ENCODE measurements at regions of chr14 and their contacts with region 1.

Region 1: GRCh38 chr14:81453166-81453766 is 53.1 kb upstream of the STON2 start:
- DNase-seq: peak in 7 of 9 donors; percentile 17 to 46 (median 34)
- ATAC-seq: peak; percentile 86
- H3K4me3 ChIP-seq: no peak overlapping the region
- H3K4me3 Mint-ChIP-seq: peak overlapping the region in 1 of 10 donors; percentile 19
- H3K27ac ChIP-seq: no peak overlapping the region
- H3K27ac Mint-ChIP-seq: no peak overlapping the region
- H3K4me1 ChIP-seq: no peaks in the 10 kb centered on the region
- H3K4me1 Mint-ChIP-seq: peaks cover 0 to 7% (median 0%) of the 10 kb centered on the region in 7 donors
- H3K27me3 ChIP-seq: no peaks in the 10 kb centered on the region
- H3K27me3 Mint-ChIP-seq: peaks cover 0 to 18% (median 5%) of the 10 kb centered on the region in 5 donors

Region 2: GRCh38 chr14:81269100-81269978 is 183.9 kb before region 1 on chr14:
- CTCF ChIA-PET with region 1: interaction called, 9 read pairs
- POLR2A ChIA-PET with region 1: no interaction called
- intact Hi-C with region 1: loop called (anchors 1 kb)
- DNase-seq: peak in 7 of 9 donors; percentile 14 to 45 (median 27)
- ATAC-seq: peak; percentile 82
- H3K4me3 ChIP-seq: no peak overlapping the region
- H3K4me3 Mint-ChIP-seq: no peak overlapping the region
- H3K27ac ChIP-seq: no peak overlapping the region
- H3K27ac Mint-ChIP-seq: no peak overlapping the region
- H3K4me1 ChIP-seq: no peaks in the 10 kb centered on the region
- H3K4me1 Mint-ChIP-seq: peaks cover 0 to 21% (median 6%) of the 10 kb centered on the region in 7 donors
- H3K27me3 ChIP-seq: no peaks in the 10 kb centered on the region
- H3K27me3 Mint-ChIP-seq: peaks cover 12 to 26% (median 17%) of the 10 kb centered on the region in 5 donors

Region 3: GRCh38 chr14:81311778-81312177 is 141.5 kb before region 1 on chr14:
- CTCF ChIA-PET with region 1: no interaction called
- POLR2A ChIA-PET with region 1: no interaction called
- intact Hi-C with region 1: no loop called
- DNase-seq: no peak
- ATAC-seq: peak; percentile 27
- H3K4me3 ChIP-seq: no peak overlapping the region
- H3K4me3 Mint-ChIP-seq: no peak overlapping the region
- H3K27ac ChIP-seq: no peak overlapping the region
- H3K27ac Mint-ChIP-seq: peak overlapping the region in 1 of 9 donors; percentile 38
- H3K4me1 ChIP-seq: no peaks in the 10 kb centered on the region
- H3K4me1 Mint-ChIP-seq: peaks cover 0 to 2% (median 0%) of the 10 kb centered on the region in 7 donors
- H3K27me3 ChIP-seq: no peaks in the 10 kb centered on the region
- H3K27me3 Mint-ChIP-seq: peaks cover 0 to 19% (median 9%) of the 10 kb centered on the region in 5 donors

Region 4: DNA sequence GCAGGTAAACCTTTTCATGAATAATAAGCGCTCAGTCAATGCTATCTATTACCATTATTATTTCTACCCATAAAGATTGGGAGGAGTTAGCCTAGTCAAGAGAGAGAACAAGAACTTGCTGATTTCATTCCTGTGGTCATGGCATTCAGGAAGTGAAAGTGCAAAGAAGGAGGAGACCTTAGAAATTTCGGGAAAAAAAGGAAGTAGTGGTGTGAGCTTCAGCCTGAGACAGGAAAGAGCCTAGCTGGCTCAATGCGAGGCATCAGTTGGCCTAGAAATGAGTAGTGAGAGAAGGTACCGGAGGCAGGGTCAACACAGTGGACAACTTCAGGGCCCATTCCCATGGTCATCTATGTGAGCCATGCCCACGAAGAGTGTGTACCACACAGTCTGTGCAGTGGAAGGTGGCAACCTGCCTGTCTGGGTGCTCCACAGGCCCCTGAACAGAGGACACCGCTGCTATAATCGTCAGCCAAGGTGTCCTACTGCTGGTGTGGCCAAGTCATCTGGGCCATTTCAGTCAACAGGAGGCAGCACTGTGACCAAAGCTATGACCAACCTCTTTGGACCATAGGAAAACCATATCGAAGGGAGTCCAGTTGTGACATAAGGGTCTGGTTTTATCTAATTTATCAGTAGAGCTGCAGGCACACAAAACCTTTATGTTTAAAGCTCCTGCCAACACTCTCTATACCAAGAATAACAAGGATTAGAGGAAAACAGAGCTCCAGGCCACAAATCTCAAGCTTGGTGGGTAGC is 36.9 kb before region 1 on chr14:
- CTCF ChIA-PET with region 1: no interaction called
- POLR2A ChIA-PET with region 1: no interaction called
- intact Hi-C with region 1: no loop called
- DNase-seq: no peak
- ATAC-seq: peak; percentile 82
- H3K4me3 ChIP-seq: no peak overlapping the region
- H3K4me3 Mint-ChIP-seq: no peak overlapping the region
- H3K27ac ChIP-seq: no peak overlapping the region
- H3K27ac Mint-ChIP-seq: no peak overlapping the region
- H3K4me1 ChIP-seq: no peaks in the 10 kb centered on the region
- H3K4me1 Mint-ChIP-seq: peaks cover 0 to 3% (median 0%) of the 10 kb centered on the region in 7 donors
- H3K27me3 ChIP-seq: no peaks in the 10 kb centered on the region
- H3K27me3 Mint-ChIP-seq: peaks cover 0 to 13% (median 2%) of the 10 kb centered on the region in 5 donors

Region 5: DNA sequence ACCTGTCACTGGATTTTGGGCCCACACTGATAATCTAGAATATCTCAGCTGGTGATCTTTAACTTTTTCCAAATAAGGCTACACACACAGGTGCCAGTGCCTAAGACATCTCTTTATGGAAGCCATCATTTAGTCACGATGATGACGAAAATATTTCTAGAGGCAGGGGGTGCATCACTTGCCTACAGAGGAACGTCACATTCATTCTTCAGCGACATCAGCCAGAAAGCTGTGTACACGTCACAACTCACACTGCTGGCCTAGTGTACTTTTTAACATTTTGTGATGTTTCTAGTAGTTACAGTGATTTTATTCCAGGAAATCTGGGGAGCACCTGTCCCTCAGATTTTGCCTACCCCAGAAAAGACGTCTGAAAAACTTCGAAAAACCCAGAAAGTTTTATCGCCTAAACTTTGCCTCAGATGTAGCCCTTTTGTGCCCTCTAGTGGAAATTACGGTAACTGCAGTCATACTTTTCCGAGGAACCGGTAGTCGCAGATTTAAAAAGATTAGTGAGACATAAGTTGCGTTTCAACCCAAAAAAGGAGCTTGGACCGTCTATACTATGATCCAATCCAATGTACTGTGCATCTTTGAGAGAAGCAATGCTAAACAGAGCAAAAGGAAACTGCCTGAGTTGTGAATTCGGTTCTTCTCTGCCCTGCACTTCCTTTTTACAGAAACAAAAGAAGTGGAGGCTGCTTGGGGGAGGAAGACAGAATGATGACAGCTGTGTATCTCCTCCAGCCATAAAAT is 11.2 kb after region 1 on chr14:
- CTCF ChIA-PET with region 1: no interaction called
- POLR2A ChIA-PET with region 1: no interaction called
- intact Hi-C with region 1: loop called in 1 of 2 experiments (anchors 1 kb)
- DNase-seq: peak; percentile 15 to 86 (median 75)
- ATAC-seq: peak; percentile 90
- H3K4me3 ChIP-seq: peak overlapping the region; percentile 85
- H3K4me3 Mint-ChIP-seq: peak overlapping the region; percentile 76 to 91 (median 88)
- H3K27ac ChIP-seq: peak overlapping the region; percentile 76
- H3K27ac Mint-ChIP-seq: peak overlapping the region; percentile 70 to 98 (median 91)
- H3K4me1 ChIP-seq: no peaks in the 10 kb centered on the region
- H3K4me1 Mint-ChIP-seq: peaks cover 0 to 14% (median 8%) of the 10 kb centered on the region in 7 donors
- H3K27me3 ChIP-seq: no peaks in the 10 kb centered on the region
- H3K27me3 Mint-ChIP-seq: no peaks in the 10 kb centered on the region

Region 6: DNA sequence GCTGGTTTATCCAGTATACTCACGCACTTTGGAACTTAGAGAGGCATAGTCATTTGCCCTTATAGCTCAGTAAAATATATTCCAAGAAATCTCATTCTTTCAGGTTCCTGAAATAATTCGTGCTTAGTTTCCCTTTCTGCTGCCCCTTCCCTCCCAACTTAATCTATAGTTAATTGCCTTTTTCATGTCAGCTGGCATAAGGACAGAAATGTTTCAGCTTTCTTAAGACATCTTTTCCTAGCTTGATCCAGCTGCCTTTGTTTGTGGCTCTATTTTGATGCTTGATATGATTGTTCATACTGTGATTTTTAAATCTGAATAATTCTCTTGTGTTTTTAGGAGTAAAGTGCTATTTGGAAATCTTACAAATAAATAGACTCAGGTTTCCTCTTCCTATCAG is 200.4 kb after region 1 on chr14:
- CTCF ChIA-PET with region 1: no interaction called
- POLR2A ChIA-PET with region 1: no interaction called
- intact Hi-C with region 1: no loop called
- DNase-seq: no peak
- ATAC-seq: no peak
- H3K4me3 ChIP-seq: no peak overlapping the region
- H3K4me3 Mint-ChIP-seq: no peak overlapping the region
- H3K27ac ChIP-seq: no peak overlapping the region
- H3K27ac Mint-ChIP-seq: no peak overlapping the region
- H3K4me1 ChIP-seq: no peaks in the 10 kb centered on the region
- H3K4me1 Mint-ChIP-seq: no peaks in the 10 kb centered on the region
- H3K27me3 ChIP-seq: no peaks in the 10 kb centered on the region
- H3K27me3 Mint-ChIP-seq: peaks cover 0 to 12% (median 7%) of the 10 kb centered on the region in 5 donors